Panc1 (cell line): ENCODE measurements at regions of chr3 and their contacts with region 1.

Region 1: GRCh38 chr3:162437480-162437879 is 940.9 kb downstream of the OTOL1 start:
- DNase-seq: no peak
- ATAC-seq: no peak
- H3K4me3 ChIP-seq: no peak overlapping the region
- H3K27ac ChIP-seq: no peak overlapping the region
- H3K4me1 ChIP-seq: no peaks in the 10 kb centered on the region
- H3K27me3 ChIP-seq: no peaks in the 10 kb centered on the region
- CTCF ChIP-seq: no peak

Region 2: GRCh38 chr3:162262147-162262546 is 175.3 kb before region 1 on chr3:
- CTCF ChIA-PET with region 1: no interaction called
- POLR2A ChIA-PET with region 1: no interaction called
- in situ Hi-C with region 1: no loop called
- intact Hi-C with region 1: no loop called
- DNase-seq: no peak
- ATAC-seq: peak; percentile 84
- H3K4me3 ChIP-seq: no peak overlapping the region
- H3K27ac ChIP-seq: no peak overlapping the region
- H3K4me1 ChIP-seq: no peaks in the 10 kb centered on the region
- H3K27me3 ChIP-seq: no peaks in the 10 kb centered on the region
- CTCF ChIP-seq: no peak

Region 3: GRCh38 chr3:162525066-162525742 is 87.7 kb after region 1 on chr3:
- CTCF ChIA-PET with region 1: interaction called, 13 read pairs
- POLR2A ChIA-PET with region 1: no interaction called
- in situ Hi-C with region 1: no loop called
- intact Hi-C with region 1: no loop called
- DNase-seq: no peak
- ATAC-seq: no peak
- H3K4me3 ChIP-seq: no peak overlapping the region
- H3K27ac ChIP-seq: no peak overlapping the region
- H3K4me1 ChIP-seq: no peaks in the 10 kb centered on the region
- H3K27me3 ChIP-seq: no peaks in the 10 kb centered on the region
- CTCF ChIP-seq: no peak